Activated CD4-positive, alpha-beta memory T cell treated with anti-CD3 and anti-CD28 coated beads for 36 hours (primary cell): ENCODE measurements at regions of chr16 and their contacts with region 1.

Region 1: DNA sequence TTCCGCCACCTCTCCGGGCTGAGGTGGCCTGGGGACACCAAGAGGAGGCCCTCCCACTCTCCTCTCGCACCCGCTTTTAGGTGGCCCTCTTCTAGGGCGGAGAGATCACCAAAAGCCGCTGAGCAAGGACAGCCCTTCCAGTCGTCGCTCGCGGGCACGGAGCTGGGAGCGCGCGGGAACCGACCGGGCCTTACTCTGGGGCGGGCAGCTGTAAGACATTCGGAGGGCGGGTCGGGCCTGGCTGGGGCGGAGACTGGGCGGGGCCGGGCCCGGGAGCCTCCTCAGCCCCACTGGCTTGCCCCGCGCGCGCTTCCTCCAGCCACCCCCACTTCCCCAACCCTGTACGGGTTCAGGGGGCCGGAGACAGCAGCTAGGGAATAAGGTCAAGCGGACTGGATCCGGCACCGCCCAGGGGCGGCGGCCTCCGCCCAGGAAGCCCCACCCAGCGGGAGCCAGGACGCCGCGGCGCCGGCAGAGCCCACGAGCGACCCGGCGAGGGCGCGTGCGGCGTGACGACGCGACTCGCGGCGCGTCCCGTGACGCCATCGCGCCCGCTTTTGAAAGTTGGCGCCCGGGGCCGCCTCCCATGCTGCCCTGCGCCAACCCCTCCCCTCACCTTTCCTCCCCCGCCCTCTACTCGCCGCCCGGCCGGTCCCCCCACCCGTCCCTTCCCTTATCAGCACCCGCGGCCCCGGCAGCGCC is 351 bp upstream of the CTCF start:
- DNase-seq: peak; percentile 99
- H3K4me3 Mint-ChIP-seq: peak overlapping the region; percentile 88
- H3K27ac Mint-ChIP-seq: peak overlapping the region; percentile 92
- H3K4me1 Mint-ChIP-seq: peaks cover 43% of the 10 kb centered on the region
- H3K27me3 Mint-ChIP-seq: no peaks in the 10 kb centered on the region

Region 2: GRCh38 chr16:67246934-67247697 is 314.9 kb before region 1 on chr16 and contains the start of gene FHOD1:
- CTCF ChIA-PET with region 1: no interaction called
- POLR2A ChIA-PET with region 1: interaction called, 3 read pairs
- intact Hi-C with region 1: loop called (anchors 1 kb)
- DNase-seq: peak; percentile 99
- H3K4me3 Mint-ChIP-seq: peak within 1 kb of the TSS; percentile 90
- H3K27ac Mint-ChIP-seq: peak within 1 kb of the TSS; percentile 86
- H3K4me1 Mint-ChIP-seq: peaks cover 47% of the 10 kb centered on the region
- H3K27me3 Mint-ChIP-seq: peaks cover 1% of the 10 kb centered on the region
- total RNA-seq, gene FHOD1: 96.3 to 111 TPM

Region 3: GRCh38 chr16:67530013-67530939 is 31.7 kb before region 1 on chr16:
- CTCF ChIA-PET with region 1: interaction called, 3 read pairs
- POLR2A ChIA-PET with region 1: interaction called, 3 read pairs
- intact Hi-C with region 1: loop called (anchors 2 kb)
- DNase-seq: peak; percentile 30
- H3K4me3 Mint-ChIP-seq: peak overlapping the region; percentile 68
- H3K27ac Mint-ChIP-seq: no peak overlapping the region
- H3K4me1 Mint-ChIP-seq: peaks cover 15% of the 10 kb centered on the region
- H3K27me3 Mint-ChIP-seq: peaks cover 19% of the 10 kb centered on the region

Region 4: GRCh38 chr16:67546761-67547422 is 15.1 kb before region 1 on chr16:
- CTCF ChIA-PET with region 1: interaction called, 111 read pairs
- POLR2A ChIA-PET with region 1: interaction called, 30 read pairs
- intact Hi-C with region 1: loop called (anchors 1 kb)
- DNase-seq: peak; percentile 81
- H3K4me3 Mint-ChIP-seq: no peak overlapping the region
- H3K27ac Mint-ChIP-seq: peak overlapping the region; percentile 89
- H3K4me1 Mint-ChIP-seq: peaks cover 34% of the 10 kb centered on the region
- H3K27me3 Mint-ChIP-seq: no peaks in the 10 kb centered on the region

Region 5: DNA sequence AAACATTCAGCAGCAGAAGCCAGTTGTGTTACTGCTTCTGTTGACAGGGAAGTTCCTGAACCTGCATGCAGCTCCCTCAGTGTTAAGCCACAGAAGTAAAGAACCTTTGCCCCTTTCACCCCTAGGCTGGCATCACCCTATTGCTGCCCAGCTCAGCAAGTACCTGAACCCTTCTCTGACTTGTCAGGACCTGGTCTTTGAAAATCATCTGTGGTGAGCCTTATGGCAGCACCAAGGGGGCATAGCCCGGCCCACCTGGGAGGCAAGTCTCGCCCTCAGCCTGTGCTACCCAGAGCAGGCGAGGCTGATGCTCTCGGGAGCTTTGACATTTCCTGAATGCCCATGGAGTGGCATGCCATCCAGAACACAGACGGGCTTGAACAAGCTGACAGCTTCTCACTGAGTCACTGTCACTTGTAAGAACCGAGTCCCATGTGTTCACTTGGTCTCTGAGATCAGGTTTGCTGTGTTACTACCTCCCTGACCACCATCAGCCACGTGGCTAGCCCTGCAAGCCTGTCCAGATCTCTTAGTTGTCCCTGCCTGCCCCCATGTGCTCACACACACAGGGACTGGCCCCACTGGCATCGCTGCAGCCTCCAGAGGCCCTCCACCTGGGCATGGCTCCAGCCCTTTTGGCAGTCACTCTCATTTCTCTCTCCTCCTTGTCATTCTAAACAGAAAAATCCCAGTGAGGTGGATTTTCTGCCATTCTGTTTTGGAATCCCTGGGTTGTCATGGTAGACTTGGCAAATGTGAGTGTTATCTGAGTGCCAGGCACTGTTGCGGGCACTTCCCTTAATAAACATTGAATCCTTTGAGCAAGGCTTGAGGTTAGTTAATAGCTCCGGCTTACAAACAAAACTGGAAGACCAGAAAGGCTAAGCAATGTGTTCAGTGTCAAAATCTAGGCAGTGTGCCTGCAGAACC is 80.1 kb after region 1 on chr16:
- CTCF ChIA-PET with region 1: interaction called, 82 read pairs
- POLR2A ChIA-PET with region 1: interaction called, 14 read pairs
- intact Hi-C with region 1: loop called (anchors 1 kb)
- DNase-seq: no peak
- H3K4me3 Mint-ChIP-seq: no peak overlapping the region
- H3K27ac Mint-ChIP-seq: no peak overlapping the region
- H3K4me1 Mint-ChIP-seq: peaks cover 11% of the 10 kb centered on the region
- H3K27me3 Mint-ChIP-seq: no peaks in the 10 kb centered on the region

Region 6: DNA sequence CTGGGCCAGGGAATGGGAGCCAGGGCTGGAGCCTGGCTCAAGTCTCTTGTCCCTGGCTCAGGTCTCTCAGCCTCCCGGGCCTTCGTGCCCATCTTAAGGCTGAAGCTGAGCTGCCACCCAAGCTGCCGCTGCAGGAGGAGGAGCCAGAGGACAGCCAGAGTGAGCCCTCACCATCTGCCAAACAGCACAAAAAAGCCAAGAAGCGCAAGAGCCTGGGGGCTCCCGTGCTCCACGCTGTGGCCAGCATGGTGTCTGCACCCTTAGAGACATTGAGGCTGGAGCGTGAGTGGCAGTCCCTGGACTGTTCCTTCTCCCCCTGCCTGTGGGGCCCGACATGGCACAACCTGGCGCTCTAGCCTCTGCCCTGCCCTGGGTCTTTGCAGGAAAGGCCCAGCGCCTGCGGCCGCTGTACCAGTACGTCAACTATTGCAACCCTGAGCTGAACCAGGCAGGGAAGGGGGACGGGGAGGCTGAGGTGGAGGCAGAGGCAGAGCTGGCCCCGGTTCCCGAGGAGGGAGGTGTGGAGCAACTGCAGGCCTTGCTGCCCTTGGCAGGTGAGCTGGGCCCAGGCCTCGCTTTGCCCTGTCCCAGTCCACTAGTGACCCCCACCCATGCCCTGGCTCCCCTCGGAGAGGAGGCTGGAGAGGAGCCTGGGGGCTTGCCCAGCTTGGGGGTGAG is 106.0 kb after region 1 on chr16:
- CTCF ChIA-PET with region 1: interaction called, 11 read pairs
- POLR2A ChIA-PET with region 1: interaction called, 5 read pairs
- intact Hi-C with region 1: no loop called
- DNase-seq: peak; percentile 90
- H3K4me3 Mint-ChIP-seq: peak overlapping the region; percentile 82
- H3K27ac Mint-ChIP-seq: no peak overlapping the region
- H3K4me1 Mint-ChIP-seq: peaks cover 15% of the 10 kb centered on the region
- H3K27me3 Mint-ChIP-seq: no peaks in the 10 kb centered on the region

Region 7: DNA sequence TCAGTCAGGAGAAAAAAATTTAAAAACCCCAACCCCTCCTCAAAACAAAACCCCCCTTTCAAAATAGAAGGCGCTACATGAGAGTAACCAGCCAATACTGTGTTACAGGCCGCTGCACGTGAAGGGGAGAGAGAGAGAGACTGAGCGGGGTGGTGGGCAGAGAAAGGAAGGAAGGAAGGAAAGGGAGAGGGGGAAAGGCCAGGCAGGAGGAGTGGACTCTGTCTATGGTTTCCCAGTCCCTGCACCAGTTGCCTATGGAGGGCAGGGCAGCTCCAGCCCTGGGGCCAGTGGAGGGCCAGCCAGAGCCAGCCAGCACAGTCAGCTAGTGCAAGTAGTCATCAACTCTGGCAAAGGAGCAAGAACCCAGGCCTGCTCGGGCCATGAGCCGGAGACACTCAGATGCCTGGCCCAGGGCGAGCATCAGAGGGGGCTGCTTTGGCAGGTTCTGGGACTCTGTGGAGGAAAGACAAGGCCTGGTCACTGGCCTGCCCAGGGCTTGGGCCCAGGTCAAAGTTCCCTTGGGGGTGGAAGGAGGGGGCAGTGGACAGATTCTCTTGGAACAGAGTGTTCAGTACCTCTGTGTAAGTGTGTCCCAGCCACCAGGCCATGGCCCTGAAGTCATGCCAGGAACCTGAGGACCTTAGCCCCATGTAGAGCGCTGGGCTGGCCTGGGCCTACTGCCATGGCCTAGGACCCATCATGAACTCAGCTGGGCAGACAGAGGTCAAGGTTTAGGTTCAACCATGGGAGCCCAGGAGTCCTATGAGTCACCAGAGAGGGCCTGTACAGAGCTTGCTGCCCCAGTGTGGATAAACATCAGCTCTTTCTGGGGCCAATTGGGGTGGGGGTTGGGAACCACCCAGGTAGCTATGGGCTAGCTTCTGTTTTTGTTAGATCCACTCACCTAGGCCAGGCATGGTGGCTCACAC is 164.4 kb after region 1 on chr16:
- CTCF ChIA-PET with region 1: no interaction called
- POLR2A ChIA-PET with region 1: no interaction called
- intact Hi-C with region 1: no loop called
- DNase-seq: no peak
- H3K4me3 Mint-ChIP-seq: no peak overlapping the region
- H3K27ac Mint-ChIP-seq: no peak overlapping the region
- H3K4me1 Mint-ChIP-seq: no peaks in the 10 kb centered on the region
- H3K27me3 Mint-ChIP-seq: no peaks in the 10 kb centered on the region

Region 8: GRCh38 chr16:68085259-68086071 is 523.5 kb after region 1 on chr16 and contains the start of gene NFATC3:
- CTCF ChIA-PET with region 1: no interaction called
- POLR2A ChIA-PET with region 1: no interaction called
- intact Hi-C with region 1: loop called (anchors 1 kb)
- DNase-seq: peak; percentile 99
- H3K4me3 Mint-ChIP-seq: peak within 1 kb of the TSS; percentile 86
- H3K27ac Mint-ChIP-seq: peak within 1 kb of the TSS; percentile 98
- H3K4me1 Mint-ChIP-seq: peaks cover 62% of the 10 kb centered on the region
- H3K27me3 Mint-ChIP-seq: no peaks in the 10 kb centered on the region
- total RNA-seq, gene NFATC3: 83.4 to 85.2 TPM